ENCODE measurements at regions of chr18 and their contacts with region 1.

Region 1: GRCh38 chr18:24033641-24034412 is 19.3 kb downstream of the TTC39C start:
- DNase-seq: no peak
- H3K4me3 ChIP-seq: no peak overlapping the region
- H3K27ac ChIP-seq: no peak overlapping the region
- H3K4me1 ChIP-seq: peaks cover 0 to 3% (median 0%) of the 10 kb centered on the region in 4 experiments; a peak in 1 of 7 replicates
- H3K27me3 ChIP-seq: no peaks in the 10 kb centered on the region
- CTCF ChIP-seq: peak in 1 of 3 experiments; percentile 5; a peak in 1 of 4 replicates
- EP300 ChIP-seq: no peak
- POLR2A ChIP-seq: no peak
- RAD21 ChIP-seq: no peak

Region 2: GRCh38 chr18:23935804-23936203 is 98.0 kb before region 1 on chr18:
- CTCF ChIA-PET with region 1: no interaction called
- POLR2A ChIA-PET with region 1: no interaction called
- DNase-seq: no peak
- H3K4me3 ChIP-seq: no peak overlapping the region
- H3K27ac ChIP-seq: no peak overlapping the region
- H3K4me1 ChIP-seq: no peaks in the 10 kb centered on the region
- H3K27me3 ChIP-seq: no peaks in the 10 kb centered on the region
- CTCF ChIP-seq: no peak
- EP300 ChIP-seq: no peak
- POLR2A ChIP-seq: no peak
- RAD21 ChIP-seq: no peak

Region 3: GRCh38 chr18:24023185-24023814 is 10.5 kb before region 1 on chr18:
- CTCF ChIA-PET with region 1: interaction called, 11 read pairs
- POLR2A ChIA-PET with region 1: no interaction called
- DNase-seq: peak in 1 of 2 experiments; percentile 62
- H3K4me3 ChIP-seq: no peak overlapping the region
- H3K27ac ChIP-seq: no peak overlapping the region
- H3K4me1 ChIP-seq: peaks cover 4 to 17% (median 11%) of the 10 kb centered on the region in 4 experiments
- H3K27me3 ChIP-seq: no peaks in the 10 kb centered on the region
- CTCF ChIP-seq: peak; percentile 44 to 65 (median 55)
- EP300 ChIP-seq: no peak
- POLR2A ChIP-seq: no peak
- RAD21 ChIP-seq: peak; percentile 29 to 55